ENCODE measurements at regions of chr12 and their contacts with region 1.

Region 1: DNA sequence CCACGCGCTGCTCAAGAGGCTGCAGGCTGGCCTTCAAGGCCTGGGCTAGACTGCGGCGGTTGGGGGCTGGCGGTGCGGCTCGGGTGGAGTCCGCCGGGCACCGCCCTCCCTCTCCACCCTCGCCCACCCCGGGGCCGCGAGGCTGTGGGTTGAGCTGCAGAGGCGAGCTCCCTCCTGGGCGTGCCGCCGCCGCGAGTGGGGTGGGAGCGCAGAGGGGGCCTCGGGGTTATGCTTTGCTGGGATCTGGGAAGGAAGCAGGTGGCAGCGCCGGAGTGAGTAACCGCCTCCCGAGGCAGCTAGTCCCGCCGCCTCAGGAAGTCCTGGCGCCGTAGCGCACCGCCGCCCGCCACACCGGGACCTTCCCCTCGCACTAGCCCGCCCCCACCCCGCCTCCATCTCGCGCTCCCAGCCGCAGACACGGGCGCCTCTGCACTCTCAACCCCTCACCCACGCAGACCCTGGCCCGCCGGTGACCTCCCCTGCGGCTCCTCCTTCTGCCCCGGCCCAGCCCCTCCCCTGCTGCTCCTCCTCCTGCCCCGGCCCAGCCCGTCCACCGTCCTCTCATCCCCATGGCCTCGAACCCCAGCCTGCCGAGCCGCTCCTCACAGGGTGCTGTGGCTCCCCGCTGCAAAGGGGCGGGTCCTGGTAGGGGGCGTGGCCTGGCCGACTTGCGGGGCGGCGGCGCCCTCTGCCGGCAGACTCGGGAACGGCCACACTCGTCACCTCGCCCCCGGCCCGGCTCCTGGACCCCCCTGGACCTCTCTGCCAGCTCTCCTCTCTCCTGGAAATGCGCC is 16.6 kb downstream of the TAMALIN start:
- DNase-seq: peak; percentile 83 to 95 (median 90)
- H3K4me3 ChIP-seq: peak overlapping the region; percentile 51 to 86 (median 70)
- H3K27ac ChIP-seq: peak overlapping the region; percentile 25 to 78
- H3K4me1 ChIP-seq: peaks cover 8 to 46% (median 43%) of the 10 kb centered on the region in 4 experiments
- H3K27me3 ChIP-seq: no peaks in the 10 kb centered on the region

Region 2: DNA sequence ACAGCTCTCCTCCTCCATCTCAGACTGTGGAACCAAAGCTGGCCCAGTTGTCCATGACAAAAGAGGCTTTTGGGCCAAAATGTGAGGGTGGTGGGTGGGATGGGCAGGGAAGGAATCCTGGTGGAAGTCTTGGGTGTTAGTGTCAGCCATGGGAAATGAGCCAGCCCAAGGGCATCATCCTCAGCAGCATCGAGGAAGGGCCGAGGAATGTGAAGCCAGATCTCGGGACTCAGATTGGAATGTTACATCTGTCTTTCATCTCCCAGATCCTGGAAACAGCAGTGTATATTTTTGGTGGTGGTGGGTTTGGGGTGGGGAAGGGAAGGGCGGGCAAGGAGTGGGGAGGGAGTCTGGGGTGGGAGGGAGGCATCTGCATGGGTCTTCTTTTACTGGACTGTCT is 28.4 kb before region 1 on chr12:
- CTCF ChIA-PET with region 1: interaction called, 377 read pairs
- POLR2A ChIA-PET with region 1: interaction called, 19 read pairs
- DNase-seq: no peak
- H3K4me3 ChIP-seq: no peak overlapping the region
- H3K27ac ChIP-seq: no peak overlapping the region
- H3K4me1 ChIP-seq: peaks cover 0 to 6% (median 0%) of the 10 kb centered on the region in 4 experiments
- H3K27me3 ChIP-seq: no peaks in the 10 kb centered on the region

Region 3: DNA sequence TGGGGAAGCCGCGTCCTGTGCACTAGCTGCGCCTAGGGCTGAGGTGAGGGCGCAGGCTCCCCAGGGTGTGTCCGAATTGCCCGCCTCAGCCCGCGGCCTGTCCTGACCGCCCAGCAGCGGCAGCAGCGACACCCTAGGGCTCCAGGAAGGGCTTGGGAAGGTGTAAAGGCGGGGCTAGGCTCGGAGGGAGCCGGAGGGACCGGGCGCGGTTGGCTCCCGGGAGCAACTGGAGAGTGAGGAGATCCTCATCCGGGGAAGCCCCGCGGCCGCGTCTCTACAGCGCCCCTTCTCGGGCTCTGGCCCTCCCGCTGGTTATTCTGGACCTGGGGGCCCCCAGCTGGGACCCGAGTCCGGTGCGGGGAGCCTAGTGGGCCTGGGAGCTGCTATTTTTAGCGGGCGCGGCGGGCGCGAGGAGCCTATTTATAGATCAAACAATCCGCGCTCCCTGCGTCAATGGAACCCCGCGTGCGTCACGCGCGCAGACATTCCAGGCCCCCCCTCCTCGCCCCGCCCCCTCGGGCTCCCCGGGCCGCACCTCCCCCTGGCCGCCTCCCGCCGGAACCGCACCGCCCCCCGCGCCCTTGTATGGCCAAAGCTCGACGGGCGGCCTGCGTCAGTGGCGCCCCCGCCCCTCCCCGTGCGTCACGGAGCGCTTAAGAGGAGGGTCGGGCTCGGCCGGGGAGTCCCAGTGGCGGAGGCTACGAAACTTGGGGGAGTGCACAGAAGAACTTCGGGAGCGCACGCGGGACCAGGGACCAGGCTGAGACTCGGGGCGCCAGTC is 27.6 kb after region 1 on chr12 and contains the start of gene NR4A1:
- CTCF ChIA-PET with region 1: interaction called, 312 read pairs
- POLR2A ChIA-PET with region 1: interaction called, 16 read pairs
- DNase-seq: peak; percentile 95 to 98 (median 97)
- H3K4me3 ChIP-seq: peak within 1 kb of the TSS; percentile 41 to 79 (median 70)
- H3K27ac ChIP-seq: peak within 1 kb of the TSS in 1 of 2 experiments; percentile 65
- H3K4me1 ChIP-seq: peaks cover 0 to 30% (median 21%) of the 10 kb centered on the region in 4 experiments
- H3K27me3 ChIP-seq: peaks cover 0 to 31% (median 22%) of the 10 kb centered on the region in 5 experiments

Region 4: GRCh38 chr12:52082988-52083637 is 59.7 kb after region 1 on chr12:
- CTCF ChIA-PET with region 1: interaction called, 661 read pairs
- POLR2A ChIA-PET with region 1: interaction called, 17 read pairs
- DNase-seq: peak; percentile 46 to 69 (median 67)
- H3K4me3 ChIP-seq: no peak overlapping the region
- H3K27ac ChIP-seq: no peak overlapping the region
- H3K4me1 ChIP-seq: peaks cover 0 to 16% (median 13%) of the 10 kb centered on the region in 4 experiments
- H3K27me3 ChIP-seq: peaks cover 0 to 21% (median 9%) of the 10 kb centered on the region in 5 experiments

Region 5: DNA sequence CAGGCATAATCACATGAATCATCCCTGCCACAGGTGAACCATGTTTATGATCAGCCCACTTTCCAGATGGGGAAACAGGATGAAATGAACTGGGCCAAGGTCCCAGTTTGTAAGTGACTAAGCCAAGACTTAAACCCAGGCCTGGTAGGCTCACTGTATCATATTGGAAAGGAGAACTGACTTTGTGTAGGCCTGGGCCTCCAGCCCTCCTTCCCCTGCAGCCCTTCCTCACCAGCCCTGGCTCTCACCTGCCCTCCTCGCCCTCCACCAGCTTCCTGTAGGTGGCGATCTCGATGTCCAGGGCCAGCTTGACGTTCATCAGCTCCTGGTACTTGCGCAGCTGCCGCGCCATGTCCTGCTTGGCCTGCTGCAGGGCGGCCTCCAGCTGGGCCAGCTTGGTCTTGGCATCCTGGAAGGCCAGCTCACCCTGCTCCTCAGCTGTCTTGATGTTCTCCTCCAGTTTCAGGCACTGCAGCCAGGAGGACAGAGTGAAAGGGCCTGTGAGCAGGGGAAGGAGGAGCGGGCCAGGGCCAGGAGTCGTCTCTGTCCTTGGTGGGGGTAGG is 148.7 kb after region 1 on chr12:
- CTCF ChIA-PET with region 1: no interaction called
- POLR2A ChIA-PET with region 1: no interaction called
- DNase-seq: peak in 2 of 3 donors; percentile 38 to 43
- H3K4me3 ChIP-seq: no peak overlapping the region
- H3K27ac ChIP-seq: no peak overlapping the region
- H3K4me1 ChIP-seq: peaks cover 0 to 12% (median 4%) of the 10 kb centered on the region in 4 experiments
- H3K27me3 ChIP-seq: no peaks in the 10 kb centered on the region

Measured in common myeloid progenitor, CD34-positive (primary cell).